CD14-positive monocyte (primary cell): ENCODE measurements at regions of chr17 and their contacts with region 1.

Region 1: GRCh38 chr17:19254651-19255050 is 17.5 kb downstream of the EPN2 start:
- DNase-seq: no peak
- H3K4me3 ChIP-seq: no peak overlapping the region
- H3K4me3 Mint-ChIP-seq: peak overlapping the region in 1 of 2 donors; percentile 1
- H3K27ac ChIP-seq: no peak overlapping the region
- H3K27ac Mint-ChIP-seq: no peak overlapping the region
- H3K4me1 ChIP-seq: no peaks in the 10 kb centered on the region
- H3K4me1 Mint-ChIP-seq: no peaks in the 10 kb centered on the region
- H3K27me3 ChIP-seq: peaks cover 2 to 16% of the 10 kb centered on the region in 2 donors
- H3K27me3 Mint-ChIP-seq: peaks cover 19 to 55% (median 42%) of the 10 kb centered on the region in 3 donors
- CTCF ChIP-seq: no peak

Region 2: GRCh38 chr17:19713451-19713850 is 458.8 kb after region 1 on chr17:
- intact Hi-C with region 1: loop called in 1 of 2 experiments (anchors 5 kb)
- DNase-seq: no peak
- H3K4me3 ChIP-seq: no peak overlapping the region
- H3K4me3 Mint-ChIP-seq: no peak overlapping the region
- H3K27ac ChIP-seq: no peak overlapping the region
- H3K27ac Mint-ChIP-seq: no peak overlapping the region
- H3K4me1 ChIP-seq: no peaks in the 10 kb centered on the region
- H3K4me1 Mint-ChIP-seq: no peaks in the 10 kb centered on the region
- H3K27me3 ChIP-seq: no peaks in the 10 kb centered on the region
- H3K27me3 Mint-ChIP-seq: peaks cover 0 to 4% (median 0%) of the 10 kb centered on the region in 3 donors
- CTCF ChIP-seq: no peak